ENCODE measurements at regions of chr10 and their contacts with region 1.

Region 1: GRCh38 chr10:97701438-97702069 is 12.0 kb upstream of the MARVELD1 start:
- DNase-seq: peak; percentile 63 to 77
- H3K4me3 ChIP-seq: no peak overlapping the region
- H3K4me3 Mint-ChIP-seq: no peak overlapping the region
- H3K27ac Mint-ChIP-seq: no peak overlapping the region
- H3K4me1 ChIP-seq: peaks cover 3% of the 10 kb centered on the region; the same call in 1 of the 2 replicates
- H3K4me1 Mint-ChIP-seq: no peaks in the 10 kb centered on the region
- H3K27me3 ChIP-seq: no peaks in the 10 kb centered on the region
- H3K27me3 Mint-ChIP-seq: no peaks in the 10 kb centered on the region
- CTCF ChIP-seq: peak; percentile 78 to 95

Region 2: DNA sequence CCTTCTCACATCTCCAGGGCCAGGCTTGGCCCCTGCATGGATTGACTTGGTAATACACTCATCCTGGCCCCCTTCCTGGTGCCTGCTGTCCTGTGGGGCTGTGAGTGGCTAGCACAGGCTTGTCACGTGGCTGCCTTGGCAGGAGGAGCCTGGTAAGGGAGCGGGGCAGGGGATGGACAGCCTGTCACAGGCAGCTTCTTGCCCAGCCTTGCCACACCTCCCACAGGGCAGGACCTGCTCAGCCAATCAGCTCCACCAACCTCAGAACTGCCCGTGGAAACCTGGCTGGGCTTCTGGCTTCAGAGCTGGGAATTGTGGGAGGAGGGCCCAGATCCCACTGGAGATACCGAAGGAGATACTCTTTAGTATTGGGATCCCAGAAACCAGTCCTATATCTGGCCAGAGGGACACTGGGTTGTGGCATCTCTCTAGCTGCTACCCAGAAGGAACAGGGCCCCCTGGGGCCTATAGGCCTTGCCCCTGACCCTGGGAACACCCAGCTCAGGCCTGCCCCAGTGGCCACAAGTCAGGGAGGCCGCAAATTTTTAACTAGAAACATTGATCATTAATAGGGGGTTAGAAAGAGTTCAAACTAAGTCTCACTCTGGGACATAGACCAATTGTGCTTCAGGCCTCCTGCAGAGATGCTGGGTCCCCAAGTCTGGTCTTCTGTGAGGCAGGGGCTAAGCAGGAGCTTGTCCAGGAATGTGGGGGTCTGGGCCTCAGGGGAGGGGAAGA is 117.3 kb before region 1 on chr10 and contains the start of gene HOGA1:
- CTCF ChIA-PET with region 1: no interaction called
- POLR2A ChIA-PET with region 1: no interaction called
- intact Hi-C with region 1: no loop called
- DNase-seq: peak; percentile 28 to 62
- H3K4me3 ChIP-seq: no peak within 1 kb of the TSS
- H3K4me3 Mint-ChIP-seq: no peak within 1 kb of the TSS
- H3K27ac Mint-ChIP-seq: peak within 1 kb of the TSS; percentile 21
- H3K4me1 ChIP-seq: peaks cover 25% of the 10 kb centered on the region
- H3K4me1 Mint-ChIP-seq: peaks cover 10% of the 10 kb centered on the region
- H3K27me3 ChIP-seq: no peaks in the 10 kb centered on the region
- H3K27me3 Mint-ChIP-seq: no peaks in the 10 kb centered on the region
- CTCF ChIP-seq: no peak
- total RNA-seq, gene HOGA1: 0.50 and 0.67 TPM in 2 replicates

Region 3: GRCh38 chr10:97676770-97677581 is 24.6 kb before region 1 on chr10:
- CTCF ChIA-PET with region 1: interaction called, 16 read pairs
- POLR2A ChIA-PET with region 1: no interaction called
- intact Hi-C with region 1: loop called (anchors 1 kb)
- DNase-seq: peak in 1 of 2 experiments; percentile 54
- H3K4me3 ChIP-seq: no peak overlapping the region
- H3K4me3 Mint-ChIP-seq: no peak overlapping the region
- H3K27ac Mint-ChIP-seq: peak overlapping the region; percentile 57
- H3K4me1 ChIP-seq: peaks cover 5% of the 10 kb centered on the region
- H3K4me1 Mint-ChIP-seq: peaks cover 2% of the 10 kb centered on the region
- H3K27me3 ChIP-seq: no peaks in the 10 kb centered on the region
- H3K27me3 Mint-ChIP-seq: no peaks in the 10 kb centered on the region
- CTCF ChIP-seq: peak; percentile 82 to 87

Region 4: GRCh38 chr10:97714048-97714371 is 12.5 kb after region 1 on chr10:
- CTCF ChIA-PET with region 1: interaction called, 15 read pairs
- POLR2A ChIA-PET with region 1: no interaction called
- intact Hi-C with region 1: no loop called
- DNase-seq: peak; percentile 74 to 81
- H3K4me3 ChIP-seq: peak overlapping the region; percentile 89
- H3K4me3 Mint-ChIP-seq: peak overlapping the region; percentile 92
- H3K27ac Mint-ChIP-seq: peak overlapping the region; percentile 91
- H3K4me1 ChIP-seq: peaks cover 21% of the 10 kb centered on the region
- H3K4me1 Mint-ChIP-seq: peaks cover 19% of the 10 kb centered on the region
- H3K27me3 ChIP-seq: no peaks in the 10 kb centered on the region
- H3K27me3 Mint-ChIP-seq: no peaks in the 10 kb centered on the region
- CTCF ChIP-seq: peak in 1 of 2 experiments; percentile 49

Region 5: DNA sequence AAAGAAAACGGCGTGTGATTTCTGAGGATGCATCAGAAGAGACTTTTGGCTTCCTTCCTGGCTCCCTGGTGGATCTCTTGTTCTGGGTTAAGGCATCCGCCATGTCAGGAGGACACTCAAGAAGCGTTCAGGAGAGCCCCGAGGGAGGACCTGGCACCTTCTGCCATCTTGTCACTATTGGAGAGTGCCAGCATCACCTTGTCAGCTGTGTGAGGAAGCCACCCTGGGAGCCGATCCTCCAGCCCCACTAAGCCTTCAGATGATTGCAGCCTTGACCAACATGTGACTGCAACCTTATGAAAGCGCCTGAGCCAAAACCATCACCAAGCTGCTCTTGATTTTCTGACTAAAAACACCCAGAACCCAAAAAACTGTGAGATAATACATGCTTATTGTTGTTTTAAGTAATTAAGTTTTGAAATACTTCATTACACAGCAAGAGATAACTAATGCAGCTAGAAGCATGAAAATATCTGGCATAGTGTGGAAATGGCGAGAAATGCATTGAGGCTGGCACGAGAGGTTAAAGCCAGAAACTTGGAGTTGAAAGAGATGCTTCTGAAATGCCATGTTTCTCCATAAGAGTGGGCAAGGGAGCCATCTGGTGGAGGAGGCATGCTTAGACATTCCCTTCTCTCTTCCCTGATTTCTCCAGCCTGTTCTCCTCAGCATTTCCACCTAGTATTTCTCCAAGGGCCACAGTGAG is 29.9 kb after region 1 on chr10:
- CTCF ChIA-PET with region 1: interaction called, 12 read pairs
- POLR2A ChIA-PET with region 1: interaction called, 4 read pairs
- intact Hi-C with region 1: loop called (anchors 1 kb)
- DNase-seq: peak; percentile 63 to 79
- H3K4me3 ChIP-seq: no peak overlapping the region
- H3K4me3 Mint-ChIP-seq: no peak overlapping the region
- H3K27ac Mint-ChIP-seq: no peak overlapping the region
- H3K4me1 ChIP-seq: peaks cover 1% of the 10 kb centered on the region; the same call in 1 of the 2 replicates
- H3K4me1 Mint-ChIP-seq: peaks cover 12% of the 10 kb centered on the region
- H3K27me3 ChIP-seq: no peaks in the 10 kb centered on the region
- H3K27me3 Mint-ChIP-seq: no peaks in the 10 kb centered on the region
- CTCF ChIP-seq: peak; percentile 81 to 88

Region 6: DNA sequence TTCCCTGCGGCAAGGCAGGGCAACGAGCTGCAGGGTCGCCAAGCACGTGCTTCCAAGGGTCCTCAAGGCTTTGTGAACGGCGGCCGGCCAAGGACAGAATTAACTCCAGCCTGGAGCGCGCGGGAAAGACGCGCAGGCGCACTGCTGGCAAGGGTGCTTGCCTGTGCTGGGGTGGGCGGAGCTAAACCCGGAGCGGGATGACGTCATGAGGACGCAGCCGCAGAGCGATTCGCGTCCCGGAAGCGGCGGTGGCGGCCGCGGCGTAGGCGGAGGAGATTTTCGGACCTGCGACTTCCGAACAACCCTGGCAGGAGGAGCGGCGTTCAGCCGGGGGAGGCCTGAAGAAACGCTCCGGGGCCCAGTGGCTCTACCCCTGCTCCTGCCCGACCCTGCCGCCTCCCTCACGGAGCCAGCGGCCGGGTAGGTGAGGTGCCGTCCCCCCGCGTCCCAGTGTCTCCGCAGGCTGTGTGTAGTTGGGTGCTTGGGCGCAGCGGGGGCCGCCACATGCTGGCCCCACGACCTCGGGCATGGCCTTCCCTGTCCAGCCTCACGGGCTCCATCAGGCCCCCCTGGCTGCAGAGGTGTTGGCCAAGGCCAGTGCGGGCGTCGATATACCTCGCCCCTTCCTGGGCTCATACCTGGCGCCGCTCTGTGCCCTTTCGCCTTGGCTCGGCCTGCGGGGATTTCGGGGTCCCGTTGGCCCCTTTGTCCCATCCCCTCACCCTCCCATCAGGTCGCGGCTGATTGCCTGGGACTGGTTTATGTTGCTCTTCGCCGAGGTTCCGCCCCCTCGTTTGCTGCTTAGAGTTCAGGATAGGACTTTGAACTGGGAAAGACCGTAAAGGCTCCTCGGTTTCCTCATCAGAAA is 35.6 kb after region 1 on chr10 and contains the start of gene ZFYVE27:
- CTCF ChIA-PET with region 1: interaction called, 12 read pairs
- POLR2A ChIA-PET with region 1: interaction called, 4 read pairs
- intact Hi-C with region 1: no loop called
- DNase-seq: peak; percentile 97 to 98
- H3K4me3 ChIP-seq: peak within 1 kb of the TSS; percentile 77
- H3K4me3 Mint-ChIP-seq: peak within 1 kb of the TSS; percentile 83
- H3K27ac Mint-ChIP-seq: peak within 1 kb of the TSS; percentile 84
- H3K4me1 ChIP-seq: peaks cover 4% of the 10 kb centered on the region; the same call in 1 of the 2 replicates
- H3K4me1 Mint-ChIP-seq: peaks cover 21% of the 10 kb centered on the region
- H3K27me3 ChIP-seq: no peaks in the 10 kb centered on the region
- H3K27me3 Mint-ChIP-seq: no peaks in the 10 kb centered on the region
- CTCF ChIP-seq: no peak
- total RNA-seq, gene ZFYVE27: 41.3 and 41.6 TPM in 2 replicates